PC-9 (cell line): ENCODE measurements at regions of chr7 and their contacts with region 1.

Region 1: DNA sequence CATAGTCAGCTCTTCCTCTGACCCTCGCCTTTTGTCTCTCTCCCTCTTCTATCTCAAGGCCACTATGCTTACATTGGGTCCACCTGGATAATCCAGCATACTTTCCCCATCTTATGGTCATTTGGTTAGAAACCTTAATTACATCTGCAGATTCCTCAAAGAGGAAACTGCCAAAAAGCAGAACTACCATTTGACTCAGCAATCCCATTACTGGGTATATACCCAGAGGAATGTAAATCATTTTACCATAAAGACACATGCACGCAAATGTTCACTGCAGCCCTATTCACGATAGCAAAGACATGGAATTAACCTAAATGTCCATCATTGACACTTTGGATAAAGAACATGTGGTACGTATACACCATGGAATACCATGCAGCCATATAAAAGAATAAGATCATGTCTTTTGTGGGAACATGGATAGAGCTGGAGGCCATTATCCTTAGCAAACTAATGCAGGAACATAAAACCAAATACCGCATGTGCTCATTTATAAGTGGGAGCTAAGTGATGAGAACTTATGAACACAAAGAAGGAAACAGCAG is 114.8 kb upstream of the NPY start:
- DNase-seq: no peak
- H3K4me3 ChIP-seq: no peak overlapping the region
- H3K27ac ChIP-seq: no peak overlapping the region
- H3K4me1 ChIP-seq: no peaks in the 10 kb centered on the region
- H3K27me3 ChIP-seq: no peaks in the 10 kb centered on the region
- CTCF ChIP-seq: no peak

Region 2: DNA sequence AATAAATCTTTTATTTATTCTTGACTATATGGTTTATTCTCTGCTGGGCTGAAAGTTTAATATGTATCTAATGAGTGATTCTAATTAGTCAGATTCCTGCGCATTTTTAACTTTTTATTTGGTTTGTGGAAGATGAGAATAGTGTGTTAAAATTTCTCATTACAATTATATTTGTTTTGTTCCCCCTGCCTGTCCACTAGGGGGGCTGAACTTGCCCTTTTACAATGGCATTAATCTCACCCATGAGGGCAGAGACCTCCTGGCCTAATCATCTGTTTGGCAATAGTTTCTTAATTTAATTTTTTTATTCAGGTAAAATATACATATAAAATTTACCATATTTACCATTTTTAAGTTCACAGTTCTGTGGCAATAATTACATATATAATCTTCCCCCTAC is 163.6 kb before region 1 on chr7:
- CTCF ChIA-PET with region 1: no interaction called
- POLR2A ChIA-PET with region 1: no interaction called
- intact Hi-C with region 1: loop called (anchors 5 kb)
- DNase-seq: no peak
- H3K4me3 ChIP-seq: no peak overlapping the region
- H3K27ac ChIP-seq: no peak overlapping the region
- H3K4me1 ChIP-seq: no peaks in the 10 kb centered on the region
- H3K27me3 ChIP-seq: no peaks in the 10 kb centered on the region
- CTCF ChIP-seq: peak; percentile 32; the same call in 1 of the 2 replicates